Left ventricle myocardium inferior (tissue), 1 donor: ENCODE measurements at regions of chr9 and their contacts with region 1.

Region 1: DNA sequence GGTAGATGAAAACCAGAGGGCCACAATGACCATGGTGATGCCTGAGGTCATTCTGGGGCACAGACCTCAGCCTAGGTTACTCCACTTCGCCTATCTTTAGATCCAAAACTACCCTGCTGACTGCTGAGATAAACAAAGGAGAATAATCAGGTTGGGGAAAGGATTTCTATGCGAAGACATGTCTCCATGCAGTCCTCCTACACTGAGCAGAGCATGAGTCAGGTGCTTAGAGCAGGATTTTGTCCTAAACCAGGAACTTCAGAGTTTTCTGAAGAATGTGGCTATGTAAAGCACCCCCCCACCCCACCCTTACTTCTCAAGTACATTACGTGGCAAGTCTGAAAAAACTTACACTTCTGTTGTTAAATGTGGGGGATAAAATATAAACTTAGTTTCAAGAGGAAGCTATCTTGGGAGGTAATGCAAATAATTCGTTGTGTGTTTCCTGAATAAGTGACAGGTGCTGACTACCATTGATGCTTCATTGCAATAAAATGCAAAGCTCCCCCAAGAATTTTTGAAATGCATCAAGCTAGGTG is 19.4 kb downstream of the PDCD1LG2 start:
- DNase-seq: no peak
- H3K4me3 ChIP-seq: no peak overlapping the region
- H3K27ac ChIP-seq: no peak overlapping the region
- H3K4me1 ChIP-seq: peaks cover 20% of the 10 kb centered on the region
- H3K27me3 ChIP-seq: no peaks in the 10 kb centered on the region
- CTCF ChIP-seq: no peak

Region 2: DNA sequence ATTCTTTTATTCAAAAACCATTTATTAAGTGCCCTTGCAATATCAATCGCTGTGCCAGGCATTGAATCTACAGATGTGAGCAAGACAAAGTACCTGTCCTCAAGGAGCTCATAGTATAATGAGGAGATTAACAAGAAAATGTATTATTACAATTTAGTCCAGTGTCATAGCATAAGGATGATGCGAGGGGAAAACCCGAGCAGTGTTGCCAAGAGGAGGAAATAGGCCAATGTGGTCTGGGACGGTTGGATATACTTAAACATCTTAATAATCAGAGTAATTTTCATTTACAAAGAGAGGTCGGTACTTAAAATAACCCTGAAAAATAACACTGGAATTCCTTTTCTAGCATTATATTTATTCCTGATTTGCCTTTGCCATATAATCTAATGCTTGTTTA is 60.9 kb before region 1 on chr9:
- intact Hi-C with region 1: loop called (anchors 10 kb)
- DNase-seq: no peak
- H3K4me3 ChIP-seq: no peak overlapping the region
- H3K27ac ChIP-seq: no peak overlapping the region
- H3K4me1 ChIP-seq: no peaks in the 10 kb centered on the region
- H3K27me3 ChIP-seq: no peaks in the 10 kb centered on the region
- CTCF ChIP-seq: no peak

Region 3: GRCh38 chr9:5557606-5558587 is 28.1 kb after region 1 on chr9:
- intact Hi-C with region 1: no loop called
- DNase-seq: no peak
- H3K4me3 ChIP-seq: peak overlapping the region; percentile 12
- H3K27ac ChIP-seq: peak overlapping the region; percentile 78
- H3K4me1 ChIP-seq: peaks cover 30% of the 10 kb centered on the region
- H3K27me3 ChIP-seq: no peaks in the 10 kb centered on the region
- CTCF ChIP-seq: no peak